Esophagus muscularis mucosa (tissue), 4 donors: ENCODE measurements at regions of chr2 and their contacts with region 1.

Region 1: GRCh38 chr2:19649785-19650380 is 251.9 kb downstream of the TTC32 start:
- DNase-seq: peak; percentile 91
- H3K4me3 ChIP-seq: no peak overlapping the region
- H3K27ac ChIP-seq: peak overlapping the region in 2 of 4 donors; percentile 12 to 48
- H3K4me1 ChIP-seq: peaks cover 0 to 21% (median 10%) of the 10 kb centered on the region in 4 donors
- H3K27me3 ChIP-seq: no peaks in the 10 kb centered on the region
- CTCF ChIP-seq: no peak
- EP300 ChIP-seq: no peak
- POLR2A ChIP-seq: no peak

Region 2: GRCh38 chr2:19711470-19712372 is 61.8 kb after region 1 on chr2:
- intact Hi-C with region 1: loop called (anchors 10 kb)
- DNase-seq: no peak
- H3K4me3 ChIP-seq: no peak overlapping the region
- H3K27ac ChIP-seq: peak overlapping the region in 2 of 4 donors; percentile 5 to 26
- H3K4me1 ChIP-seq: peaks cover 0 to 10% (median 8%) of the 10 kb centered on the region in 4 donors
- H3K27me3 ChIP-seq: no peaks in the 10 kb centered on the region
- CTCF ChIP-seq: no peak
- EP300 ChIP-seq: no peak
- POLR2A ChIP-seq: no peak